ENCODE measurements at regions of chr20 and their contacts with region 1.

Region 1: GRCh38 chr20:37534401-37535157 is 6.9 kb upstream of the BLCAP start:
- DNase-seq: no peak
- H3K4me3 ChIP-seq: no peak overlapping the region
- H3K27me3 ChIP-seq: peaks cover 2% of the 10 kb centered on the region; the same call in 1 of the 2 replicates
- CTCF ChIP-seq: peak; percentile 76

Region 2: GRCh38 chr20:37270576-37271420 is 263.8 kb before region 1 on chr20:
- CTCF ChIA-PET with region 1: interaction called, 74 read pairs
- POLR2A ChIA-PET with region 1: no interaction called
- DNase-seq: no peak
- H3K4me3 ChIP-seq: no peak overlapping the region
- H3K27me3 ChIP-seq: 0 out of 2 replicates have a peak, but pooled peaks cover 2% of the 10 kb centered on the region
- CTCF ChIP-seq: no peak

Region 3: GRCh38 chr20:37276494-37277252 is 257.9 kb before region 1 on chr20:
- CTCF ChIA-PET with region 1: interaction called, 74 read pairs
- POLR2A ChIA-PET with region 1: no interaction called
- DNase-seq: peak; percentile 57
- H3K4me3 ChIP-seq: no peak overlapping the region
- H3K27me3 ChIP-seq: no peaks in the 10 kb centered on the region; the same call in 1 of the 2 replicates
- CTCF ChIP-seq: peak; percentile 58

Region 4: DNA sequence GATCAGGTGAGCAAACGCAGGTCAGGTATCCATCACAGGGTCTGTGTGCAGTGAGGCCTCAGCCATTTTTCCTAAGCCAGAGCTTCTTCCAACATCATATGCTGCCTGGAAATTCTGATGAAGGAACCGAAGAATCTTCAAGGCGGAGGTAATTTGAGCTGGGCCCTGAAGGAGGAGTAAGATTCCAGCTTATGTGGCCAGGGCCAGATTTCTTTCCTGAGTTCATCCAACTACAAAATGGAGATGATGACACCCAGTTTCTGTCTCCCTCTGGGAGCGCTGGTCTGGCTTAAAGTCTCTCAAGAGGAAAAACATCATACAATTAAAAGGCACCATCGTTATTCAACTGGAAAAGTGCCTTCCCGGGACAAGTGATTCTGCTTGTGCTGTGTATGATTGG is 252.0 kb before region 1 on chr20:
- CTCF ChIA-PET with region 1: interaction called, 45 read pairs
- POLR2A ChIA-PET with region 1: no interaction called
- DNase-seq: no peak
- H3K4me3 ChIP-seq: no peak overlapping the region
- H3K27me3 ChIP-seq: no peaks in the 10 kb centered on the region; the same call in 1 of the 2 replicates
- CTCF ChIP-seq: peak; percentile 71

Region 5: DNA sequence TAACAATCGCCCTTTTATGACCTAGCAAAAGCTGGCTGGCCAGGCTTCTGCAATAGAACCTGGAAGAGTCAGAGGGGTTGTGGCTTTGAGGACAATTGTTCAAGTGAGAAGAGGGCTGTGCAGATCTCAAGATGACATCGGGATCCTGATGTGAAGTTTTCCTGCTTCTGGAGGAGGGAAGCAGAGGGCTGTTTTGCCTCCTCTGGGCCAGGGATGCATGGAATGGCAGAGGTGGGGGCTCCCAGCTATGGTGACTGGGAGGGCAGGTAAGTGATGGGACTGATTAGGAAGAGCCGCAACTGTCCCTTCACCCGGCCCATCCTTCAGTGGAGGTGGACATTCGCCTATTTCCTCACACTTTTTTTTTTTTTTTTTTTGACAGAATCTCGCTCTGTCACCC is 36.5 kb after region 1 on chr20:
- CTCF ChIA-PET with region 1: no interaction called
- POLR2A ChIA-PET with region 1: no interaction called
- DNase-seq: no peak
- H3K4me3 ChIP-seq: no peak overlapping the region
- H3K27me3 ChIP-seq: peaks cover 15% of the 10 kb centered on the region
- CTCF ChIP-seq: no peak

Region 6: DNA sequence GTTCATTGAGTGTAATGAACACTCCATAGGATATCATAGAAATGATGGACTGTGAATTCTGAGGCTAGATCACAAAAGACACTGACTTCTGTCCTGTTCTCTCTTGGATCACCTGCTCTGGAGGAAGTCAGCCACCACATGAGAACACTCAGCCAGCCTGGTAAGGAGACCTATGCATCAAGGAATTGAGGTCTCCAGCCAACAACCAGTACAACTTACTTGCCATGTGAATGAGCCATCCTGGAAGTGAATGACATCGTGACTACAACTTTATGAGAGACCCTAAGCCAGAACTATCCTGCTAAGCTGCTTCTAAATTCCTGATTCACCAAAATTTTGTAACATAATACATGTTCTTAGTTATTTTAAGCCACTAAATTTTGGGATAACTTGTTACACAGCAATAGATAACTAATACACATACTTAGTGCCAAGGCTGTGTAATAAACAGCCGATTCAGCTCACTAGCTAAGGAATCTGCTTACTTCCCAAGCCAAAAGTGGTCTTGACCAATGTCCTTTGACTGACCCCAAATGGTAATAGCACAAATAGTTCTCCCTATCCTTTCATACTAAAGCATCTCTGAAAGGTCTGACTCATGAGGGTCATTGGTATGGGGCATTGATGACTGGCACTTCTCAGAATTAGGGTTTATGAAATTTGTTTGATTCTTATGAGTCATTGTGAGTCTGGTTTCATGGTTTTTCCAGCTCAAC is 152.3 kb after region 1 on chr20:
- CTCF ChIA-PET with region 1: no interaction called
- POLR2A ChIA-PET with region 1: no interaction called
- DNase-seq: no peak
- H3K4me3 ChIP-seq: no peak overlapping the region
- H3K27me3 ChIP-seq: peaks cover 7% of the 10 kb centered on the region
- CTCF ChIP-seq: no peak